HepG2 (cell line): ENCODE measurements at regions of chr14 and their contacts with region 1.

Region 1: GRCh38 chr14:49767562-49768300 is at the start of gene KLHDC2:
- DNase-seq: peak; percentile 73
- ATAC-seq: peak; percentile 83
- H3K4me3 ChIP-seq: peak within 1 kb of the TSS; percentile 76 to 99 (median 94)
- H3K27ac ChIP-seq: peak within 1 kb of the TSS; percentile 99
- H3K4me1 ChIP-seq: peaks cover 47% of the 10 kb centered on the region
- H3K27me3 ChIP-seq: no peaks in the 10 kb centered on the region; a peak in 1 of 5 replicates
- CTCF ChIP-seq: peak; percentile 73
- EP300 ChIP-seq: no peak
- POLR2A ChIP-seq: peak; percentile 77 to 91
- RAD21 ChIP-seq: no peak; the same call in 1 of the 2 replicates
- total RNA-seq, gene KLHDC2: 80.3 and 95.5 TPM in 2 replicates

Region 2: GRCh38 chr14:49538926-49539325 is 228.8 kb before region 1 on chr14:
- CTCF ChIA-PET with region 1: no interaction called
- POLR2A ChIA-PET with region 1: no interaction called
- in situ Hi-C with region 1: no loop called
- intact Hi-C with region 1: no loop called
- DNase-seq: no peak
- ATAC-seq: no peak
- H3K4me3 ChIP-seq: no peak overlapping the region
- H3K27ac ChIP-seq: no peak overlapping the region
- H3K4me1 ChIP-seq: no peaks in the 10 kb centered on the region
- H3K27me3 ChIP-seq: no peaks in the 10 kb centered on the region
- CTCF ChIP-seq: no peak
- EP300 ChIP-seq: no peak
- POLR2A ChIP-seq: no peak
- RAD21 ChIP-seq: no peak

Region 3: GRCh38 chr14:49585803-49586672 is 181.7 kb before region 1 on chr14 and contains the start of gene RPS29:
- CTCF ChIA-PET with region 1: no interaction called
- POLR2A ChIA-PET with region 1: interaction called, 18 read pairs
- in situ Hi-C with region 1: no loop called
- intact Hi-C with region 1: no loop called
- DNase-seq: peak; percentile 99
- ATAC-seq: peak; percentile 85
- H3K4me3 ChIP-seq: peak within 1 kb of the TSS; percentile 82 to 98 (median 94)
- H3K27ac ChIP-seq: peak within 1 kb of the TSS; percentile 89
- H3K4me1 ChIP-seq: peaks cover 48% of the 10 kb centered on the region
- H3K27me3 ChIP-seq: no peaks in the 10 kb centered on the region; a peak in 1 of 5 replicates
- CTCF ChIP-seq: no peak; the same call in 1 of the 2 replicates
- EP300 ChIP-seq: 0 out of 4 replicates have a peak, but pooled peaks of 1 of the 2 experiments have one; percentile 52
- POLR2A ChIP-seq: peak; percentile 89 to 98
- RAD21 ChIP-seq: peak; percentile 17
- total RNA-seq, gene RPS29: 3,901 and 4,303 TPM in 2 replicates

Region 4: GRCh38 chr14:49620182-49621113 is 147.3 kb before region 1 on chr14 and contains the starts of genes MGAT2 and RPL36AL:
- CTCF ChIA-PET with region 1: no interaction called
- POLR2A ChIA-PET with region 1: interaction called, 44 read pairs
- in situ Hi-C with region 1: no loop called
- intact Hi-C with region 1: no loop called
- DNase-seq: peak; percentile 95
- ATAC-seq: peak; percentile 97
- H3K4me3 ChIP-seq: peak within 1 kb of the TSS; percentile 81 to 92 (median 92)
- H3K27ac ChIP-seq: peak within 1 kb of the TSS; percentile 94
- H3K4me1 ChIP-seq: peaks cover 62% of the 10 kb centered on the region
- H3K27me3 ChIP-seq: no peaks in the 10 kb centered on the region; a peak in 1 of 5 replicates
- CTCF ChIP-seq: peak; percentile 46
- EP300 ChIP-seq: peak in 1 of 2 experiments; percentile 57; a peak in 1 of 4 replicates
- POLR2A ChIP-seq: peak; percentile 97 to 98
- RAD21 ChIP-seq: peak; percentile 63
- total RNA-seq, gene MGAT2: 47.2 and 51.9 TPM in 2 replicates
- total RNA-seq, gene RPL36AL: 294 and 383 TPM in 2 replicates

Region 5: GRCh38 chr14:49641697-49642129 is 126.0 kb before region 1 on chr14:
- CTCF ChIA-PET with region 1: no interaction called
- POLR2A ChIA-PET with region 1: interaction called, 10 read pairs
- in situ Hi-C with region 1: no loop called
- intact Hi-C with region 1: no loop called
- DNase-seq: peak; percentile 96
- ATAC-seq: peak; percentile 98
- H3K4me3 ChIP-seq: peak overlapping the region in 2 of 3 experiments; percentile 7 to 13; a peak in 2 of 6 replicates
- H3K27ac ChIP-seq: peak overlapping the region; percentile 70
- H3K4me1 ChIP-seq: peaks cover 57% of the 10 kb centered on the region
- H3K27me3 ChIP-seq: no peaks in the 10 kb centered on the region
- CTCF ChIP-seq: no peak
- EP300 ChIP-seq: peak in 1 of 2 experiments; percentile 85; a peak in 2 of 4 replicates
- POLR2A ChIP-seq: peak in 1 of 2 experiments; percentile 40; a peak in 1 of 4 replicates
- RAD21 ChIP-seq: no peak

Region 6: DNA sequence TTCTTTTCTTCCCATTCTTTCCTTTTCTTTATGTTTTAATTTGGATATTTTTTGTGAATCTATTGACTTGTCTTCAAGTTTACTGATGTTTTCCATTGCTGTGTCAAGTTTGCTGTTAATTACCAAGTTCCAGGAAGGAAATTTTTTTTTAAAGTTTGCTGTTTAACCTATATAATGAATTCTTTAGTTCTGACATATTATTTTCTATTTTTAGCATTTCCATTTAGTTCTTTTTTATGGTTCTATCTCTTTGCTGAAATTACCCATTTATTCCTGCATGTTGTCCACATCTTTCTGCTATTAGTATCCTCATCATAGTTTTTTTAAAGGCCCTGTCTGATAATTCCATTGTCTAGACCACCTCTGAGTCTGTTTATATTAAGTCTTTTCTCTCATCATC is 47.0 kb before region 1 on chr14:
- CTCF ChIA-PET with region 1: no interaction called
- POLR2A ChIA-PET with region 1: interaction called, 30 read pairs
- in situ Hi-C with region 1: no loop called
- intact Hi-C with region 1: loop called (anchors 2 kb)
- DNase-seq: no peak
- ATAC-seq: no peak
- H3K4me3 ChIP-seq: no peak overlapping the region
- H3K27ac ChIP-seq: no peak overlapping the region
- H3K4me1 ChIP-seq: peaks cover 21% of the 10 kb centered on the region
- H3K27me3 ChIP-seq: no peaks in the 10 kb centered on the region
- CTCF ChIP-seq: no peak
- EP300 ChIP-seq: no peak
- POLR2A ChIP-seq: no peak
- RAD21 ChIP-seq: no peak

Region 7: DNA sequence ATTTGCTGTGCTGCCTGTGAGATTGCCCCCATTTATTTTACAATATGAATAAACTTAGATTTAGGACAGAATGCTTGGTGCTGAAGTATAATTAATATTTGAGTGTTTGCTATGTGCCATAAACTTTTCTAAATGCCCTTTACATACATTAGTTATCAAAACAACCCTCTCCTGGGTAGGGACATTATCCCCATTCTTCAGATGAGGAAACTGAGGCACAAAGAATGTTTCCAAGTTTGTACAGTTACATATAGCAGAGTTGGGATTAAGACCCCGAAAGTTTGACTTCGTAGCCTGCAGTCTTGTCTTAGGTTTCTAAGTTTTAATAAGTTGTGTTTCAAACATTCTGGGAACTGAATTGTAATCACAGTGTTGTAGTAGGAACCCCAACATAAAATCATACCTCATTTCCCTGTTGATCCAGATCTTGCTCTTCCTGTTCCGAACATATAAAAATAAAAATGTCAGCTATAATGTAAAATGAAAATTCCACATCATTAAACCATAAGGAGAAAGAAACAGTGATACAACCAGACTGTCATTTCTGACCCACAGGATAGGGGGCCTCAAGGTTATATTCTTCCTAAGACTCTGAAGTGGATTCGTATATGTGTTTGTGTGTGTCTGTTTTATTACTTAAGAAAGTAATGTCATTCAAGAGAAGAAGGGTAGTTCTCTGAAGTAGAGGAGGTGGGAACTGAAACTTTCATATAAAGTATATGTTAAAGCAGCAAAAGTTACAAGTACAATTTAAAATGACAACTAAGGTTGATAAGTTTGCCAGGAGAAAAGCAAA is 18.8 kb after region 1 on chr14:
- CTCF ChIA-PET with region 1: no interaction called
- POLR2A ChIA-PET with region 1: interaction called, 36 read pairs
- in situ Hi-C with region 1: no loop called
- intact Hi-C with region 1: no loop called
- DNase-seq: no peak
- ATAC-seq: no peak; the same call in 2 of the 3 replicates
- H3K4me3 ChIP-seq: no peak overlapping the region
- H3K27ac ChIP-seq: no peak overlapping the region
- H3K4me1 ChIP-seq: no peaks in the 10 kb centered on the region
- H3K27me3 ChIP-seq: no peaks in the 10 kb centered on the region
- CTCF ChIP-seq: no peak
- EP300 ChIP-seq: no peak
- POLR2A ChIP-seq: no peak
- RAD21 ChIP-seq: no peak